ENCODE measurements at regions of chr7 and their contacts with region 1.

Region 1: GRCh38 chr7:47088329-47089067 is 493.4 kb downstream of the TNS3 start:
- DNase-seq: peak in 4 of 14 experiments; percentile 14 to 45 (median 36)
- ATAC-seq: no peak
- H3K4me3 ChIP-seq: no peak overlapping the region
- H3K4me3 Mint-ChIP-seq: no peak overlapping the region
- H3K27ac ChIP-seq: no peak overlapping the region
- H3K27ac Mint-ChIP-seq: no peak overlapping the region
- H3K4me1 ChIP-seq: peaks cover 3% of the 10 kb centered on the region
- H3K4me1 Mint-ChIP-seq: no peaks in the 10 kb centered on the region
- H3K27me3 ChIP-seq: peaks cover 0 to 4% of the 10 kb centered on the region in 2 experiments
- H3K27me3 Mint-ChIP-seq: peaks cover 11% of the 10 kb centered on the region
- CTCF ChIP-seq: peak; percentile 68

Region 2: DNA sequence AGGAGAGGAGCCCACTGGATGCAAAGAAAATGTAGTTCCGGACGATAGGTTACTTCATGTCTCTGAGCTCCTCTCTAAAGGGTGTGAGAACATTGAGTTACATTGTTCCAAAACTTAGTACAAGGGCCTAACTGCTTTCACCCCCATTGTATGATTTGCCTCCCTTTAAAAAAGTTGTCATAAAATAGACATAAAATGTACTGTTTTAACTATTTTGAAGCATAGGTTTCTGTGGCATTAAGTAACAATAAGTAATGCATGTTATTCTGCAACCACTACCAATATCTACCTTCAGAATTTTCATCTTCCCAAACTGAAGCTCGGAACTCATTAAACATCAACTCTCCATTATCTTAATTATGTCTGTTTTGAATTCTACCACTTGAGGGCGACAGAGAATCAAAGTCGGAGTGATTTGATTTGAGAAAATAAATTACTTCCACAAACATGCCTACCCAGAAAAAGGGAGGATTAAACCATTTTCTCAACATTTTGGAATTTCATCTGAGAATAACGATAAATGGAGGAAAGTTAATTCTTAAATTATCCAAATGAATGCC is 1197.5 kb before region 1 on chr7:
- CTCF ChIA-PET with region 1: no interaction called
- POLR2A ChIA-PET with region 1: no interaction called
- intact Hi-C with region 1: loop called in 1 of 2 experiments (anchors 2 kb)
- DNase-seq: peak in 3 of 14 experiments; percentile 29 to 36 (median 33)
- ATAC-seq: no peak
- H3K4me3 ChIP-seq: no peak overlapping the region
- H3K4me3 Mint-ChIP-seq: no peak overlapping the region
- H3K27ac ChIP-seq: no peak overlapping the region
- H3K27ac Mint-ChIP-seq: no peak overlapping the region
- H3K4me1 ChIP-seq: no peaks in the 10 kb centered on the region
- H3K4me1 Mint-ChIP-seq: no peaks in the 10 kb centered on the region
- H3K27me3 ChIP-seq: peaks cover 31 to 59% of the 10 kb centered on the region in 2 experiments
- H3K27me3 Mint-ChIP-seq: peaks cover 82% of the 10 kb centered on the region
- CTCF ChIP-seq: peak; percentile 65

Region 3: GRCh38 chr7:45923290-45923689 is 1165.2 kb before region 1 on chr7:
- CTCF ChIA-PET with region 1: no interaction called
- POLR2A ChIA-PET with region 1: no interaction called
- intact Hi-C with region 1: loop called in 1 of 2 experiments (anchors 1 kb)
- DNase-seq: peak in 12 of 14 experiments; percentile 24 to 67 (median 44)
- ATAC-seq: no peak
- H3K4me3 ChIP-seq: peak overlapping the region; percentile 13
- H3K4me3 Mint-ChIP-seq: peak overlapping the region; percentile 30
- H3K27ac ChIP-seq: no peak overlapping the region
- H3K27ac Mint-ChIP-seq: peak overlapping the region; percentile 67
- H3K4me1 ChIP-seq: peaks cover 26% of the 10 kb centered on the region
- H3K4me1 Mint-ChIP-seq: peaks cover 19% of the 10 kb centered on the region
- H3K27me3 ChIP-seq: peaks cover 32 to 48% of the 10 kb centered on the region in 2 experiments
- H3K27me3 Mint-ChIP-seq: peaks cover 66% of the 10 kb centered on the region
- CTCF ChIP-seq: peak; percentile 51

Region 4: GRCh38 chr7:47031786-47032535 is 56.5 kb before region 1 on chr7:
- CTCF ChIA-PET with region 1: no interaction called
- POLR2A ChIA-PET with region 1: no interaction called
- intact Hi-C with region 1: no loop called
- DNase-seq: no peak
- ATAC-seq: no peak
- H3K4me3 ChIP-seq: no peak overlapping the region
- H3K4me3 Mint-ChIP-seq: no peak overlapping the region
- H3K27ac ChIP-seq: no peak overlapping the region
- H3K27ac Mint-ChIP-seq: no peak overlapping the region
- H3K4me1 ChIP-seq: no peaks in the 10 kb centered on the region
- H3K4me1 Mint-ChIP-seq: no peaks in the 10 kb centered on the region
- H3K27me3 ChIP-seq: no peaks in the 10 kb centered on the region
- H3K27me3 Mint-ChIP-seq: no peaks in the 10 kb centered on the region
- CTCF ChIP-seq: no peak

Region 5: DNA sequence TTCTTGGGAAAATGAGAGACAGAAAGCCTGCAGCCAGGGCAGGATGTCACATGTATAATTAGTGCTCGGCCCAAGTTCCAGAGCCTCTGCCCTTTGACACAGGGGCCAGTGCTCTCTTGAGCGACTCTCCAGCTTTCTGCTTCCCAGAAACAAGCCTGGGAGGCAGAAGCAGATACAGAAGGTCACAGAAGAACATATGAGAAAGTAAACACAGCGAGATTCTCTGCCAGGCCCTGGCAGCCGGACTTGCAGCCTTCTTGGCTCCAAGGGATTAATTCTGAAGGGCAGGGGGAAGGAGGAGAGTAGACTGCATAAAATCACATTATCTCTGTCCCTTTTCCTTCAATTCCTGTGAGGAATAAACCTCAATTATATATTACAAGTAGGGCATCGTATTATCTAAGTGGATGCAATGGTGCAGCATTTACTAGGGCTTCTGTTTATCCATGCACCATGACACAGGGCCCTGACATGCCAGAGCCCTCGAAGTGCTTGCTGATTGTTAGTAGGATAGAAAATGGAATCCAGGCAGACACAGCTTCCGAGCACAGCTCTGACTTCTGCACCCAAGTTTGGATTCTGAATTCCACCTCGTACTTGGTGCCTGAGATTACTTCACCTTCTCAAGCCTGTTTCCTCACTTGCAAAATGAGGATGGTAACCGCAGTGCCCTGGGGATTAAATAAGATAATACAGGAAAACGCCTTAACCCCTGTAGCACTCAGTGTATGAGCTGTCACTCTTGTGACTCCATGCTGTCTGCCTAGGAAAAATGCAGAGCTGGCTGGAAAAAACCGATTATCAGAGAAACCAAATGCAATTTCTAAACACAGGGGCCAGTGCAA is 43.1 kb before region 1 on chr7:
- CTCF ChIA-PET with region 1: no interaction called
- POLR2A ChIA-PET with region 1: no interaction called
- intact Hi-C with region 1: no loop called
- DNase-seq: no peak
- ATAC-seq: no peak
- H3K4me3 ChIP-seq: no peak overlapping the region
- H3K4me3 Mint-ChIP-seq: no peak overlapping the region
- H3K27ac ChIP-seq: no peak overlapping the region
- H3K27ac Mint-ChIP-seq: no peak overlapping the region
- H3K4me1 ChIP-seq: no peaks in the 10 kb centered on the region
- H3K4me1 Mint-ChIP-seq: no peaks in the 10 kb centered on the region
- H3K27me3 ChIP-seq: peaks cover 0 to 3% of the 10 kb centered on the region in 2 experiments
- H3K27me3 Mint-ChIP-seq: no peaks in the 10 kb centered on the region
- CTCF ChIP-seq: no peak

Measured in CD4-positive, alpha-beta T cell (primary cell).